ENCODE measurements at regions of chr9 and their contacts with region 1.

Region 1: DNA sequence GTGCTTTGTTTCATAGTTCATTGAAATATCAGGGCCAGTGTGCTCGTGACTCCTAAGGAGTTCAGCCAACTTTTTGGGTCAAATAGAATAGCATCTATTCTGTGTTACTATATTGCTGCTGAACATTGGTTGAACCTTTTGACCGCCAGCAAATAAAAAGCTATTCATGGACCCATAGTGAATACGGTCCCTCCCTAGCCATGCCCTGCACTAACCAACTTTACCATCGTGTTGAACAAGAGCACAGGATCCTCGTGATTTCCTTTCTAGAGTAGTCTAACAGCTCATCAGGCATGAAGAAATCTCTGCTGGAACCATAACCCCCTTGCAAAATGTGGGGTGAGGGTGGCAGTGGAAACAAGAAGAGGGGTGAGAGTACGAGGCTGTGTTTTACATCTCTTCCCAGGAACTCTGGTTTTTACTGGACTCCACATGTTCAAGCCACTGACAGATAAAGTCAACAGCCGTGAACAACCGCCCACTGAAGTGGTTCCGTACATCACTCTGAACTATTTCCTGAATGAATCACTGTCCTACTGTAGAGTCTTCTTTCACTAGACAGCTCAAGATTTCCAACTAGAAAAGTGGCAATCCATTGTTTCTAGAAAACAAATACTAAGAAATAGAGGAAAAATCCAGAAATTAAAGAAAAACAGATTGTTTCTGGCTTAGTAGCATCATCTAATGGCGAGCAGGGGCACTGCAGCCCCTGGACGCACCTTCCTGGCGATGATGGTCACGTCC is 70.1 kb upstream of the SPATA31E1 start:
- DNase-seq: peak; percentile 33
- H3K4me3 Mint-ChIP-seq: no peak overlapping the region
- H3K27ac Mint-ChIP-seq: no peak overlapping the region
- H3K4me1 Mint-ChIP-seq: no peaks in the 10 kb centered on the region
- H3K27me3 Mint-ChIP-seq: no peaks in the 10 kb centered on the region
- CTCF ChIP-seq: peak; percentile 69

Region 2: GRCh38 chr9:87684627-87685219 is 127.8 kb before region 1 on chr9:
- CTCF ChIA-PET with region 1: no interaction called
- intact Hi-C with region 1: loop called (anchors 2 kb)
- DNase-seq: peak; percentile 25
- H3K4me3 Mint-ChIP-seq: no peak overlapping the region
- H3K27ac Mint-ChIP-seq: no peak overlapping the region
- H3K4me1 Mint-ChIP-seq: peaks cover 8% of the 10 kb centered on the region
- H3K27me3 Mint-ChIP-seq: no peaks in the 10 kb centered on the region
- CTCF ChIP-seq: peak; percentile 31

Region 3: GRCh38 chr9:87725900-87726709 is 86.4 kb before region 1 on chr9 and contains the start of gene CTSL:
- CTCF ChIA-PET with region 1: interaction called, 7 read pairs
- intact Hi-C with region 1: loop called (anchors 1 kb)
- DNase-seq: peak; percentile 70
- H3K4me3 Mint-ChIP-seq: peak within 1 kb of the TSS; percentile 98
- H3K27ac Mint-ChIP-seq: peak within 1 kb of the TSS; percentile 87
- H3K4me1 Mint-ChIP-seq: peaks cover 10% of the 10 kb centered on the region
- H3K27me3 Mint-ChIP-seq: peaks cover 10% of the 10 kb centered on the region
- CTCF ChIP-seq: peak; percentile 32
- total RNA-seq, gene CTSL: 32.2 and 42.9 TPM in 2 replicates

Region 4: DNA sequence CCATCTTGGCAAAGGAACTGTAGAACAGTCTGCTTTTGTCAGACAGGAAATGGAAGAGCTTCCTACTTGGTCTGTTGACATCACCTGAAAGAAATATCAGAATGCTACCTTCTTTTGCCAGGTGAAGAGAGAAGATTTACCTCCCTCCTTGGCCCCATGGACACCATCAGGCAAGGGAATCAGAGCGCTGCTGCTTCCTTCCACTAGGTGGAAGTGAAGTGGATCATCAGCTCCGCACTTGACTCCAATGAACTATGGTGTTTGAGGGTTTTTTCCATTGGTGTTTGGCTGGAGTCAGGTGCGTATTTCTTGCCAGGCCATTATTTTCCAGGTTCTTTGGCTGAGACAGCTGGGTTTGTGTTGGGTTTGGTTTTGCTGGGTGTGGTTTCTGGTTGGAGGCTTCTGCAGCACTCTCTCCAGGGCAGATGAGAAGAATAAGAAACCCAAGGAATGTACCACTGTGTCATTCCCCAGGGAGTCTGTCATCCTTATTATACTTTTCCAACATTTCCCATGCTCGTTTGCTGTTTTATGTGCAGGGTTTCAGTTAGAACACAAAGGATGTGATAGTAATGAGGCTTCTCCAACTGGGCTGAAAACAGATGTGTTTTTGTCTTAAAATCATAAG is 82.6 kb after region 1 on chr9:
- CTCF ChIA-PET with region 1: no interaction called
- intact Hi-C with region 1: no loop called
- DNase-seq: no peak
- H3K4me3 Mint-ChIP-seq: no peak overlapping the region
- H3K27ac Mint-ChIP-seq: no peak overlapping the region
- H3K4me1 Mint-ChIP-seq: no peaks in the 10 kb centered on the region
- H3K27me3 Mint-ChIP-seq: no peaks in the 10 kb centered on the region
- CTCF ChIP-seq: no peak

Region 5: GRCh38 chr9:88322906-88323566 is 510.5 kb after region 1 on chr9:
- CTCF ChIA-PET with region 1: no interaction called
- intact Hi-C with region 1: no loop called
- DNase-seq: no peak
- H3K4me3 Mint-ChIP-seq: no peak overlapping the region
- H3K27ac Mint-ChIP-seq: no peak overlapping the region
- H3K4me1 Mint-ChIP-seq: no peaks in the 10 kb centered on the region
- H3K27me3 Mint-ChIP-seq: no peaks in the 10 kb centered on the region
- CTCF ChIP-seq: no peak